CD4-positive, alpha-beta T cell (primary cell): ENCODE measurements at regions of chr1 and their contacts with region 1.

Region 1: DNA sequence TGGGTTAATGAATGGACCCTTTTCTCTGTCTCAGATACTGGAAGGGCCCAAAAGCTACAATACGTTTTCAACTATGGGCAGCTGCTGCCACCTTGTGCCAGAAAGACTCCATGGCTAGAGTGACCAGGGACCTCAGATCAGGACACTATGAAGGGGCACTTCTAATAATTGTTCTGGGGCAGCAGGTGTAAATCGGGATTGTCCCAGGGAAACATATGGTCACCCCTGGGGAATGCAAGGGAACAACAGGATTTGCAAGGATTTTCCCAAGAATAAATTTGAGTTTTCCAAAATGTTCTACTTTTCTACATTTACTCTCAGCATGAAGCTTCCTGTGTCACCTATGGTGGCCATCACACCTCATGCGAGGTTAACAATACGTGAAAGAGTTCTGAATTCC is 12.0 kb upstream of the FCAMR start:
- DNase-seq: peak; percentile 48 to 77 (median 59)
- ATAC-seq: peak; percentile 81
- H3K4me3 ChIP-seq: no peak overlapping the region
- H3K4me3 Mint-ChIP-seq: no peak overlapping the region
- H3K27ac ChIP-seq: no peak overlapping the region
- H3K27ac Mint-ChIP-seq: no peak overlapping the region
- H3K4me1 ChIP-seq: no peaks in the 10 kb centered on the region
- H3K4me1 Mint-ChIP-seq: no peaks in the 10 kb centered on the region
- H3K27me3 ChIP-seq: peaks cover 6 to 12% of the 10 kb centered on the region in 2 experiments
- H3K27me3 Mint-ChIP-seq: peaks cover 18% of the 10 kb centered on the region
- CTCF ChIP-seq: peak; percentile 88

Region 2: GRCh38 chr1:206635080-206635977 is 346.9 kb before region 1 on chr1 and contains the start of gene DYRK3:
- CTCF ChIA-PET with region 1: interaction called, 23 read pairs
- POLR2A ChIA-PET with region 1: no interaction called
- intact Hi-C with region 1: loop called (anchors 1 kb)
- DNase-seq: peak; percentile 74 to 95 (median 85)
- ATAC-seq: peak; percentile 93
- H3K4me3 ChIP-seq: peak within 1 kb of the TSS; percentile 64
- H3K4me3 Mint-ChIP-seq: peak within 1 kb of the TSS; percentile 92
- H3K27ac ChIP-seq: peak within 1 kb of the TSS in 1 of 2 donors; percentile 52
- H3K27ac Mint-ChIP-seq: peak within 1 kb of the TSS; percentile 66
- H3K4me1 ChIP-seq: peaks cover 20% of the 10 kb centered on the region
- H3K4me1 Mint-ChIP-seq: peaks cover 18% of the 10 kb centered on the region
- H3K27me3 ChIP-seq: peaks cover 0 to 14% of the 10 kb centered on the region in 2 experiments
- H3K27me3 Mint-ChIP-seq: no peaks in the 10 kb centered on the region
- CTCF ChIP-seq: no peak
- total RNA-seq, gene DYRK3: 1.6 to 1.7 TPM

Region 3: DNA sequence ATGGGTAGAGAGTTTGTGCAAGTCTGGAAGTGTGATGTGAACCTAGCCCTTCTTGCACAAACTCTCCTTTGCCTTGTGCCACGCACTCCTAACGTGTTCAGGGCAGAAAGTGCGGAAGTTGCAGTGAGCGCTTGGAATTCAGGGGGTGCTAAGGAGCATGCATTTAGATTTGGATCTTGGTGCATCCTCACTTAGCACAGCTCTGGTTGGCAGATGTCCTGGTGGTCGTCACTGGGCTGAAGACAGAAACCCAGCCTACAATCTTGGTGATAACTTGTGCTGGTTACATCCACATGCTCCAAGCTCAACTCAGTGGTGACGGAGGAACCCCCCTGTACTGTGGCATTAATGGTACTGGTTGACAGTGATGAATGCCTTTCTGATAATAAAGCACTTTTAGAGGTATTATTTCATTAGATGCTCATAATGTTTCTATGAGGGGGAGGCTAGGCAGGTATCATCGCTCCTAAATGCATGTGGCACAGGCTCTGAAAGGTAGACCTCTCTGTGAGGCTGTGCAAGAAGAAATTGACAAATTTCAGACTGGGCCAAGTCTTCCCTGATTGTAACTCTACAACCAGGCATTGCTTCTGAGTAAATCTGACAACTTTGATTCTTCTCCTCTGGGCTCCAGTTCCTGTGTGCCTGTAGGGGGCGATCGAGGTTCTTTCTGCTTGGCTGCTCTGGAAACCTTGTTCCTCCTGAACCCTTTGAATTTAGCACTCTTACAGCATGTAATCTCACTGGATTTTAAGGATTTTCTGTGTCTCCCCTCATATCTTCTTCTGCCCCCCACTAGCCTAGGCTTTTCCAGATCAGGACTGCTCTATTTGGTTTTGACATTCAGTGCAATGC is 256.9 kb before region 1 on chr1:
- CTCF ChIA-PET with region 1: interaction called, 4 read pairs
- POLR2A ChIA-PET with region 1: interaction called, 3 read pairs
- intact Hi-C with region 1: loop called (anchors 1 kb)
- DNase-seq: peak; percentile 40 to 82 (median 55)
- ATAC-seq: peak; percentile 54
- H3K4me3 ChIP-seq: no peak overlapping the region
- H3K4me3 Mint-ChIP-seq: no peak overlapping the region
- H3K27ac ChIP-seq: no peak overlapping the region
- H3K27ac Mint-ChIP-seq: peak overlapping the region; percentile 62
- H3K4me1 ChIP-seq: peaks cover 51% of the 10 kb centered on the region
- H3K4me1 Mint-ChIP-seq: peaks cover 50% of the 10 kb centered on the region
- H3K27me3 ChIP-seq: no peaks in the 10 kb centered on the region
- H3K27me3 Mint-ChIP-seq: no peaks in the 10 kb centered on the region
- CTCF ChIP-seq: peak; percentile 47

Region 4: GRCh38 chr1:206865013-206865671 is 117.1 kb before region 1 on chr1 and contains the start of gene IL20:
- CTCF ChIA-PET with region 1: interaction called, 5 read pairs
- POLR2A ChIA-PET with region 1: interaction called, 6 read pairs
- intact Hi-C with region 1: loop called (anchors 2 to 5 kb)
- DNase-seq: peak; percentile 79 to 93 (median 85)
- ATAC-seq: peak; percentile 98
- H3K4me3 ChIP-seq: no peak within 1 kb of the TSS
- H3K4me3 Mint-ChIP-seq: no peak within 1 kb of the TSS
- H3K27ac ChIP-seq: no peak within 1 kb of the TSS
- H3K27ac Mint-ChIP-seq: no peak within 1 kb of the TSS
- H3K4me1 ChIP-seq: peaks cover 5% of the 10 kb centered on the region
- H3K4me1 Mint-ChIP-seq: peaks cover 7% of the 10 kb centered on the region
- H3K27me3 ChIP-seq: peaks cover 0 to 2% of the 10 kb centered on the region in 2 experiments
- H3K27me3 Mint-ChIP-seq: peaks cover 12% of the 10 kb centered on the region
- CTCF ChIP-seq: peak; percentile 87
- total RNA-seq, gene IL20: not detected

Region 5: DNA sequence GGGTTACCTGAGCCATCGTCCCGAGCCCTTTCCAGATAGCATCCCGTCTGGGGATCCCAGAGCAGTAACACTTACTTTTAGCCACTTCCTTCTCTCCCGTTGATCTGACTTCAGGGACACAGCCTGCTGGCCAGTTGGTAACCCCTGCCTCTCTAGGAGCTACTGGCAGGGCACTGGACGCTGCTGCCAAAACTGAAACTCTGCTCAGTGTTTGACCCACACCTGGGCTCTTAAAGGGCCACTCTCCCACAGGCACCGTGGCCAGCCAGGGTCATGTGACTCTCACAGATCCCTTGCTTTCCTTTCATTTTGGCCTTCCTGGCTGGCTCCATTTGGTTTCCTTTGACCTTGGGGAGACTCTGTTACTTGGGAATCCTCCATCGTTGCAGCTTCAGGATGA is 36.0 kb before region 1 on chr1 and contains the start of gene PIGR:
- CTCF ChIA-PET with region 1: no interaction called
- POLR2A ChIA-PET with region 1: no interaction called
- intact Hi-C with region 1: no loop called
- DNase-seq: no peak
- ATAC-seq: no peak
- H3K4me3 ChIP-seq: no peak within 1 kb of the TSS
- H3K4me3 Mint-ChIP-seq: no peak within 1 kb of the TSS
- H3K27ac ChIP-seq: no peak within 1 kb of the TSS
- H3K27ac Mint-ChIP-seq: no peak within 1 kb of the TSS
- H3K4me1 ChIP-seq: no peaks in the 10 kb centered on the region
- H3K4me1 Mint-ChIP-seq: no peaks in the 10 kb centered on the region
- H3K27me3 ChIP-seq: peaks cover 0 to 6% of the 10 kb centered on the region in 2 experiments
- H3K27me3 Mint-ChIP-seq: peaks cover 9% of the 10 kb centered on the region
- CTCF ChIP-seq: no peak
- total RNA-seq, gene PIGR: not detected